ENCODE measurements at regions of chr7 and their contacts with region 1.

Region 1: GRCh38 chr7:43582503-43583423 is at the start of gene STK17A:
- DNase-seq: peak; percentile 68 to 92 (median 86)
- H3K4me3 ChIP-seq: peak within 1 kb of the TSS; percentile 58 to 98 (median 86)
- H3K27ac ChIP-seq: peak within 1 kb of the TSS in 57 of 59 donors; percentile 31 to 92 (median 78)
- H3K27me3 ChIP-seq: no peaks in the 10 kb centered on the region
- CTCF ChIP-seq: peak; percentile 59 to 99 (median 93)
- total RNA-seq, gene STK17A: 6.3 to 23.7 (median 10.4) TPM

Region 2: DNA sequence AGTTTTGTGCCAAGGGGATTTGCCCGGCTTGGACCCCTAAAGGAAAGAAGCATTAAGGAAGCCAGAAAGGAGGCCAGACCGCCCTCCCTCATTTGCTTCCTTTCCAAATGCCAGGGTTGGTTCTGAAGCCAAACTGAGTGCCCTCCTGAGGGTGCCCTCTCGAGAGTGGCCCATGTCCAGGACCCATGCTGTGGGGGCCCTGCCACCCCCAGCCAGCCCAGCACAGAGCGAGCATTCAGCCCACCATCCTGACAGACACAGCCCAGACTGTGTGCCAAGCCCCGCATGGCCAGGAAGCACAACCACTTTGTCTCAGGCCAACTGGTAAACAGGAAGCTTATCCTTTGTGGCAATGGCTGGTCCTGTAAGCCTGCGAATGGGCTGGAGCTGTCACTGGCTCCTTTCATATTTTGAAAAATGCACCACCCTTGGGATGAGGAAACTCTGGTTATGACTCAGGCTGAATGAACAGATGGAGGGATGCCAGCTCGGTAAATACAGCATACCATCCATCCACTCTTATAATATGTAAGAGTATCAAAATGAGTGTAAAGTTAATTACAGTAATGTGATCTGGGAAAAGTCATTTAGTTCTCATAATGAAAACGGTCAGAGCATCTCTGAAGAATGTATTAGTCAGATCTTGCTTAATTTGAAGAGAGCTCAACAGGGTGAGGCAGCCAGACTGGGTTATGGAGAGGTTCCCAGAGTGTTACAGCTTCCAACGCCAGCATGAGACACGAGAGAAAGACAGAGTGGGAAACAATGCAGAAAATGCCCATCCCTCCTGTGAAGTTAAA is 65.1 kb after region 1 on chr7:
- intact Hi-C with region 1: loop called (anchors 5 kb)
- DNase-seq: peak; percentile 33 to 78 (median 62)
- H3K4me3 ChIP-seq: peak overlapping the region in 26 of 59 donors; percentile 4 to 42 (median 24)
- H3K27ac ChIP-seq: peak overlapping the region; percentile 40 to 93 (median 86)
- H3K27me3 ChIP-seq: no peaks in the 10 kb centered on the region
- CTCF ChIP-seq: no peak

Region 3: GRCh38 chr7:43700059-43700501 is 117.3 kb after region 1 on chr7:
- intact Hi-C with region 1: loop called (anchors 1 kb)
- DNase-seq: no peak
- H3K4me3 ChIP-seq: peak overlapping the region in 31 of 59 donors; percentile 0 to 39 (median 20)
- H3K27ac ChIP-seq: peak overlapping the region in 2 of 59 donors; percentile 12 to 15
- H3K27me3 ChIP-seq: no peaks in the 10 kb centered on the region
- CTCF ChIP-seq: peak; percentile 64 to 93 (median 76)

Region 4: DNA sequence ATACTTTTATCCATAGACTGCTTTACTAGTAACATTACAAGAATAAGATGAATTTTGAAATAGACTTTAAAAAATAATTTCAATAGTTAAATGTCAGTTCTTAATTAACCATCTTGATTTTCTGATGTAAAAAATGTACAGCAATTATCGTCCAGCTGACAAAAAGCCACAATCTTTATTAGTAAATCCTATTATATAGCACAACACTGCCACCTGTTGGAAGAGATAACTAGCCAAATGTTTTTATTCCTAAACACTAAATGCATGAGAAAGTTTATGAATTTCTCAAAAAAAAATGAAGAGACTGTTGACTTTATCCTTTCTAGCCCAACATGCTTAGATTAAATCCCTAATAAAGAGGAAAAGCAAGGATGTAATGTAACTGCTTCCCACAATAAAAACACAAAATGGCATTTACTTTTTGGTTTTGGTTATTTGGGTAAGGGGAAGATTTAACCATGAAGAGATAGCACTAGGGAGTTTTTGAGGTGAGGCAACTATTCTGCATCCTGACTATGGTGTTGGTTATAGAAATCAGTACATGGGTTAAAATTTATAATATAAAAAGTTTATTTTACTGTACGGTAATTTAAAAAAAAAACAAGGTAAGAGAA is 138.5 kb after region 1 on chr7:
- intact Hi-C with region 1: loop called in 1 of 2 experiments (anchors 5 kb)
- DNase-seq: no peak
- H3K4me3 ChIP-seq: no peak overlapping the region
- H3K27ac ChIP-seq: no peak overlapping the region
- H3K27me3 ChIP-seq: no peaks in the 10 kb centered on the region
- CTCF ChIP-seq: peak; percentile 48 to 88 (median 75)

Region 5: DNA sequence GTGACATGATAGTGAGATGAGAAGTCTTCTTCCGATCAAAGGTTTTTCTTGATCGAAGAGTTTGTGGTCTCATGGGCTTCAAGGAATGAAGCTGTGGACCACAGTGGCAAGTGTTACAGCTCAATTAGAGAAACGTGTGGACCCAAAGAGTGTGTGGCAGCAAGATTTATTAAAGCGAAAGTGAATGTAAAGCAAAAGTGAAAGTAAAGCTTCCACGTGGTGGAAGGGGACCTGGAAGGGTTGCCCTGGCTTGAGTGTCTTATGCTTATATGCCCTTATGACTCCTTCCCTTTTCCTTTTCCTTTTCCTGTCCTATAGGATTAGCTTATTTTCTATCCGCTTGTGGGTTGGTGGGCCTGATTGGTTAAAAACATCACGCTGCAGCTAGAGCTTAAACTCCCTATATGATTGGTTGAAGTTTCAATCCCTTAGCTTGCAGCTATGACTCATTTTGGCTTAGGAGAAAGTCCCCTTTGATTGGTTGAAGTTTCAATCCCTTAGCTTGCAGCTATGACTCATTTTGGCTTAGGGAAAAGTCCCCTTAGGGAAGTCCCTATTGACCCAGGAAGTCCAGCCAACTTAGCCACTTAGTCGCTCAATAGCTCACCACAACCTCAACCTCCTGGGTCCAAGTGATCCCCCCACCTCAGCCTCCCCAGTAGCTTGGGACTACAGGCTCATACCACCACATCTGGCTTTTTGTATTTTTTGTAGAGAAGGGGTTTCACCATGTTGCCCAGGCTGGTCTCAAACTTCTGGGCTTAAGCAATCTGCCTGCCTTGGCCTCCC is 251.9 kb after region 1 on chr7:
- intact Hi-C with region 1: loop called (anchors 1 to 5 kb)
- DNase-seq: no peak
- H3K4me3 ChIP-seq: peak overlapping the region in 27 of 59 donors; percentile 2 to 46 (median 24)
- H3K27ac ChIP-seq: no peak overlapping the region
- H3K27me3 ChIP-seq: no peaks in the 10 kb centered on the region
- CTCF ChIP-seq: no peak